Lower leg skin (tissue), 4 donors: ENCODE measurements at regions of chr15 and their contacts with region 1.

Region 1: DNA sequence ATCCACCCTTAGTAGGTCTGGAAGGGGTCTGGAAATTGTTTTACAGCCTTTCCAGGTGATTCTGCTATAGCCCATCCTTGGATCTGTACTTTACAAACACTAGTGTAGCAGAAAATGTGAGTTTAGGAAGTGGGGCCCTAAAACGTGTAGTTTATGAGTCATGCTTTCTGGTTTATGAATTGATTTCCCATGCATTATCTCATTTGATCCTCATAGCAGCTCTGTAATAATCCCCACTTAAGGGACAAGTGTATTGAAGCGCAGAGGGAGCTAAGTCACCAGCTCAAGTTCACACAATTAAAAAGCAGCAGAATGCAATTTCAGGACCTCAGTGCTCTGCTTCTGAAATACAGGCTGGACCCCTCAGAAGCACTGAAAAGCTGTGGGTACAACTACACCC is 22.7 kb upstream of the STARD5 start:
- DNase-seq: no peak
- H3K4me3 ChIP-seq: no peak overlapping the region
- CTCF ChIP-seq: no peak
- POLR2A ChIP-seq: no peak

Region 2: DNA sequence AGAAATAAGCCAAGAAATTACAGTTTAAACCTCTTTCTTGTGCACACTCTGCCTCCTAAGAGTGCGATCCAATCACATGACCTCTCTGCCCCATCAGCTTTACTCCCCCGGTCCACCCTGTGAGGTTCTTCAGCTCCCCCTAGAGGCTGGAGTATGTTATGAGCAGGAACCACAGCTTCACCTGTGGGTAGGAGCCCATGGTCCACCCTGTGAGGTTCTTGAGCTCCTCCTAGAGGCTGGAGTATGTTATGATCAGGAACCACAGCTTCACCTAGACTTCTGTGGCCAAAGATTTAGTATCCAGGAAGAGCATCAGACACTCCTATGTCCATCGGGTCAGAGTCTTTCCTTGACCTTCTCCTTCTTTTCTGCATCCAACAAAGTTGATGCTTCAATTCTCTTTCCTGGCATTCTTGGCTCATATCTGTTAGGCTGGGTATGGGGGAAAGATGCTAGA is 1750.5 kb before region 1 on chr15:
- intact Hi-C with region 1: loop called (anchors 5 kb)
- DNase-seq: no peak
- H3K4me3 ChIP-seq: no peak overlapping the region
- CTCF ChIP-seq: peak in 1 of 3 donors; percentile 63
- POLR2A ChIP-seq: no peak